Activated CD4-positive, alpha-beta T cell treated with anti-CD3 and anti-CD28 coated beads, Interleukin-2, amount 10 ng/mL, durations not matched to agents 7 days and 5 days (primary cell): ENCODE measurements at regions of chrX and their contacts with region 1.

Region 1: GRCh38 chrX:129649268-129650182 is 5.2 kb downstream of the APLN start:
- DNase-seq: no peak
- H3K4me3 Mint-ChIP-seq: no peak overlapping the region
- H3K27ac Mint-ChIP-seq: no peak overlapping the region
- H3K4me1 Mint-ChIP-seq: peaks cover 4% of the 10 kb centered on the region
- H3K27me3 Mint-ChIP-seq: peaks cover 14% of the 10 kb centered on the region

Region 2: DNA sequence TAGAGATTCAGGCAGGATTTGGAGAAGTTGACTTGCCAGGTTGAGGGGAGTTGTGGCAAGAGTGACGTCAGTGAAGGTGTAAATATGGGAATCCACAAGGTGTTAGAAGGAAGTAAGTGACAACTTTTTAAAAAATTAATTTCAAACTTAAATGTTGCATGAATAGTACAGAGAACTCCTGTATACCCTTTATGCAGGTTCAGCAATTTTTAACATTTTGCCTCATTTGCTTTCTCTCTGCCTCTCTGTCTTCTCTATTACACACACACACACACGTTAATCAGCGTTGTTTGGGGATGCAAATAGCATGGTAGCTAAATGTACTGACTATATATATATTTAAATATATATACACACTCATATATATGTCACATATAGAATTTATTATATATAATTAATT is 400.0 kb before region 1 on chrX:
- CTCF ChIA-PET with region 1: no interaction called
- POLR2A ChIA-PET with region 1: no interaction called
- DNase-seq: no peak
- H3K4me3 Mint-ChIP-seq: no peak overlapping the region
- H3K27ac Mint-ChIP-seq: no peak overlapping the region
- H3K4me1 Mint-ChIP-seq: no peaks in the 10 kb centered on the region
- H3K27me3 Mint-ChIP-seq: no peaks in the 10 kb centered on the region

Region 3: DNA sequence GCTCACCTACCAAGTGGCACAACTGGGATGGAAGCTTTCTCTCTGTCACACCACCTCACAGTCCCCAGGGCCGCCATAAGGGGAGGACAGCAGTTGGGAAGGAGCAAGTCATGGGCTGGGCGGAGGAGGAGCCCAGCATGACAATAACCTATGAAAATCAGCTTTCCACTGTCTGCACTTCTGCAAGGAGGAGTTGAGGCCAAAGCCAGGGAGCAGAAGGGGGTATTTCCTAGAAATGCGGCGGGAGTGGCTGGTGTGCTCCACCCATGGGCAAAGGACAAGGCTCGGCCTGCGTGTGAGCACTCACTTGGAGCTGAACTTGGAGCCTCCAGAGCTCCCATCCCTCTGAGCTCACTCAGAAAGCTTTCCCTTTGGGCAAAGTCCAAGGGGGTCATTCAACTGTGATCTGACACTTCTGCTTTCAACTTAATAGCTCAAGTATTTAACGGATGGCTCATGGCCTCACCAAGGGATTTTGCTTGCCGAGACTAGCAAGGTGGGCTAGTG is 13.3 kb before region 1 on chrX:
- CTCF ChIA-PET with region 1: interaction called, 10 read pairs
- POLR2A ChIA-PET with region 1: no interaction called
- DNase-seq: no peak
- H3K4me3 Mint-ChIP-seq: no peak overlapping the region
- H3K27ac Mint-ChIP-seq: no peak overlapping the region
- H3K4me1 Mint-ChIP-seq: peaks cover 10% of the 10 kb centered on the region
- H3K27me3 Mint-ChIP-seq: no peaks in the 10 kb centered on the region

Region 4: DNA sequence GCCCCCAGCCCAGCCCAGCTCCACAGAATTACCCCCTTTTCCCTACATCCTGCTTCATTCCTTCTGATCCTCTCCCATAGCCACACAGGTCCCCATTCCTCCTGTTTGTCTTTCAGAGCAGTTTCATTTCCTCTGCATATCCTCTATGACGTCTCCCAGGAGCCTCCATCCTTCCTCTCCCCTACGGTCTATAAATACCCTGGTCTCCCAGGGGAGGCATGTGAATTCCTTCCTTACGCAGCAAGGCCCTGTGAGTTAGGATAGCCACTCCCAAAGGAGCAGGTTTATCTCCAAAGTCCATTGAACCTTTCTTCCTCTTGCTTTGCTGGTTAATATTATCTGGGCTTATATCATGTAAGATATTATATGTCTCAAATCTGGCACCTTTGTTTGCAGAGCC is 13.6 kb after region 1 on chrX:
- CTCF ChIA-PET with region 1: no interaction called
- POLR2A ChIA-PET with region 1: no interaction called
- DNase-seq: no peak
- H3K4me3 Mint-ChIP-seq: no peak overlapping the region
- H3K27ac Mint-ChIP-seq: no peak overlapping the region
- H3K4me1 Mint-ChIP-seq: no peaks in the 10 kb centered on the region
- H3K27me3 Mint-ChIP-seq: peaks cover 31% of the 10 kb centered on the region

Region 5: GRCh38 chrX:129686422-129686948 is 37.0 kb after region 1 on chrX:
- CTCF ChIA-PET with region 1: no interaction called
- POLR2A ChIA-PET with region 1: no interaction called
- DNase-seq: no peak
- H3K4me3 Mint-ChIP-seq: no peak overlapping the region
- H3K27ac Mint-ChIP-seq: no peak overlapping the region
- H3K4me1 Mint-ChIP-seq: no peaks in the 10 kb centered on the region
- H3K27me3 Mint-ChIP-seq: no peaks in the 10 kb centered on the region